ENCODE measurements at regions of chr3 and their contacts with region 1.

Region 1: DNA sequence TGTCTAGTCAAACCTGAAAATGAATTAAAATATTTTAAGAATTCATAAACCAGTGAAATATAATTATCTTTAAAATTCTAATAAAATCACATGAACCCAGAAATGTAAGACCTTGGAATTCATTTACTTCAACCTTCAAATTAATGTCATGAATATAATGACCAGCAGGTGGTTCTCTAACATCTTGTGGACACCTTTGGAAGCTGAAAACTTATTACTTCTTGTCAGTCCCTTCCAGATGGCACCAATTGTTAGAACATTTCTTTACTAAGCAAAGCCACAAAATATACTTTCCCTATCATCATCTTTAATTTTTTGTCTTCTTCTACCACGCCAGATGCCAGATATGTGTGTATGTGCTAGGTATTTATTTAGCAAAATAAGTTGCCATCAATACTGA is 240.0 kb downstream of the MBNL1 start:
- DNase-seq: peak; percentile 33
- ATAC-seq: peak; percentile 52; the same call in 1 of the 2 replicates
- H3K4me3 ChIP-seq: no peak overlapping the region
- H3K27ac ChIP-seq: no peak overlapping the region
- H3K4me1 ChIP-seq: no peaks in the 10 kb centered on the region
- H3K27me3 ChIP-seq: no peaks in the 10 kb centered on the region
- CTCF ChIP-seq: peak; percentile 40 to 46 (median 42); a peak in 4 of 6 replicates
- POLR2A ChIP-seq: no peak
- RAD21 ChIP-seq: peak; percentile 63

Region 2: DNA sequence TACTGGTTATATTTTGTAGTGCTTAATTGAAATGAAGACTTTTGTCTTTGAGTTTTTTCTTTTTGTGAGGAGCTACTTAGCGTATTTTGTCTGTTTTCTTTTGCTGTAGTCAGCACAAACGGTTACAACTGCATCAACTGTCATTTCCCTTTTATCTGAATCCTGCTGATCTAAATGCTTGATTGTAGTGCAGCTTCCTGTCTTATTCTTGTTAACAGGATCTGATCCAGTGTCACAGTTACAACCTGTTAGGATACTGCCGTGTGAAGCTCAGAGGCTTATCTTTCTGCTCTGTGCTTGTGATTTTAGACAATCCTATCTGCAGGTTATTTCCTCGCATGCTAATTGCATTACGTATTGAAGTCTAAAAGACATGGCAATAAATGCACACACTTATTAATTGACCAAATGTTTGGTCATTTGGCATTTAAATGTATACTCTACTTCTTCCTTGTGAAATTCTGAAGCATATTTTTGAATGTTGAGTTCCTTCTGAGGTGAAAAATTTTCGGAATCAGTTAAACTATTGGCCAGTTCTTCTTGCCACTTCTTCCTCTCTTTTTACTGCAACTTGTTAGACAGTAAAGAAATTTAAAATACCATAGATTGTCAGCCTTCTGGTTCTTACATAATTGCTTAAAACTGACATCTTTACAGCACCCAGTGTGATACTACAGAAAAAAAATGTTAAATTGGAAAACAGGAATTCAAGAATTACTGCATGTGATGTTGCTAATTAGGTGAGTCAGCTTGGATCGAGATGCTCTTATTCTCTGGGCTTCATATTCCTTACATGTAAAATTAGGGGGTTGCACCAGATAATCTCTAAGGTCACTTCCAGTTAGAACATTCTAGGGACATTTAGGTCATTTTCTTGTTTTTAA is 71.8 kb before region 1 on chr3:
- CTCF ChIA-PET with region 1: no interaction called
- POLR2A ChIA-PET with region 1: no interaction called
- RAD21 ChIA-PET with region 1: no interaction called
- intact Hi-C with region 1: no loop called
- DNase-seq: no peak
- ATAC-seq: no peak
- H3K4me3 ChIP-seq: no peak overlapping the region
- H3K27ac ChIP-seq: no peak overlapping the region
- H3K4me1 ChIP-seq: no peaks in the 10 kb centered on the region; a peak in 1 of 4 replicates
- H3K27me3 ChIP-seq: no peaks in the 10 kb centered on the region
- CTCF ChIP-seq: no peak
- POLR2A ChIP-seq: no peak
- RAD21 ChIP-seq: no peak

Region 3: DNA sequence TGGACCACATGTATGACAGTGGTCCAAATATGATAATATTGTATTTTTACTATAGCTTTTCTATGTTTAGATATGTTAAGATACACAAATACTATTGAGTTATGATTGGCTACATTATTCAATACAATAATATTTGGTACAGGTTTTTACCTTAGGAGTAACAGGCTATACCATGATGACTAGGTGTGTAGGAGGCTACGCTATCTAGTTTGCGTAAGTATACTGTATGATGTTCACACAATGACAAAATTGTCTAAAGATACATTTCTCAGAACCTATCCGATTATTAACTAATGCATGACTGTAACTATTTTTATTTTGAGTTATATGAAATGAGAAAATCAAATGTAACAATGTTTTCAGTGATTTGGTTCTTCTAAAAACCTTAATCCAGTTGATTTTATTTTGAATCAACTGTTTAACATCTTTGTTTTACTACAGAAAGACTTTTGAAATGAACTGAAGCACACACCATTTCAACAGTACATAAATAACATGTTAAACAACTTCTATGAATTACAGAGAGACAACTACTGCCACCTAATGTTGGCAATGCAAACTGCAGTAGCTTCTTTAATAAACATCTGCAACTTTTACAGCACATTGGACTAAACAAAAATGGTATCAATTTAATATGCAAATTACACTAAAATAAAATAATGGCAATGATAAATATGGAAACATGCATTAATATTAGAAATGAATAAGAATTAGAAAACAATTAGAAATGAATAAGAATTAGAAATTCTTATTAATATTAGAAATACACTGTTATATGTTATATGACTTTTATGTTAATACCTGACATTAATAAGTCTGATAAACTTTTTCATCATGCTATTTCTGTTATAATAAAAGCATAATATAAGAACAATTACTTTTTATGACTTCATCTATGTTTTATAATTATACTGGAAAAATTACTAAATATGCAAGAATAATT is 15.8 kb after region 1 on chr3:
- CTCF ChIA-PET with region 1: interaction called, 12 read pairs
- POLR2A ChIA-PET with region 1: no interaction called
- RAD21 ChIA-PET with region 1: no interaction called
- intact Hi-C with region 1: no loop called
- DNase-seq: peak; percentile 33
- ATAC-seq: peak; percentile 55; the same call in 1 of the 2 replicates
- H3K4me3 ChIP-seq: no peak overlapping the region
- H3K27ac ChIP-seq: no peak overlapping the region
- H3K4me1 ChIP-seq: no peaks in the 10 kb centered on the region
- H3K27me3 ChIP-seq: no peaks in the 10 kb centered on the region
- CTCF ChIP-seq: peak; percentile 40 to 88 (median 69); a peak in 5 of 6 replicates
- POLR2A ChIP-seq: no peak
- RAD21 ChIP-seq: peak; percentile 67

Region 4: GRCh38 chr3:152574461-152575079 is 65.9 kb after region 1 on chr3:
- CTCF ChIA-PET with region 1: interaction called, 12 read pairs
- POLR2A ChIA-PET with region 1: no interaction called
- RAD21 ChIA-PET with region 1: interaction called in 1 of 2 experiments, 3 read pairs
- intact Hi-C with region 1: no loop called
- DNase-seq: peak; percentile 38
- ATAC-seq: peak; percentile 83
- H3K4me3 ChIP-seq: no peak overlapping the region
- H3K27ac ChIP-seq: no peak overlapping the region
- H3K4me1 ChIP-seq: no peaks in the 10 kb centered on the region
- H3K27me3 ChIP-seq: no peaks in the 10 kb centered on the region
- CTCF ChIP-seq: peak; percentile 48 to 66 (median 65)
- POLR2A ChIP-seq: no peak
- RAD21 ChIP-seq: peak; percentile 81

Region 5: DNA sequence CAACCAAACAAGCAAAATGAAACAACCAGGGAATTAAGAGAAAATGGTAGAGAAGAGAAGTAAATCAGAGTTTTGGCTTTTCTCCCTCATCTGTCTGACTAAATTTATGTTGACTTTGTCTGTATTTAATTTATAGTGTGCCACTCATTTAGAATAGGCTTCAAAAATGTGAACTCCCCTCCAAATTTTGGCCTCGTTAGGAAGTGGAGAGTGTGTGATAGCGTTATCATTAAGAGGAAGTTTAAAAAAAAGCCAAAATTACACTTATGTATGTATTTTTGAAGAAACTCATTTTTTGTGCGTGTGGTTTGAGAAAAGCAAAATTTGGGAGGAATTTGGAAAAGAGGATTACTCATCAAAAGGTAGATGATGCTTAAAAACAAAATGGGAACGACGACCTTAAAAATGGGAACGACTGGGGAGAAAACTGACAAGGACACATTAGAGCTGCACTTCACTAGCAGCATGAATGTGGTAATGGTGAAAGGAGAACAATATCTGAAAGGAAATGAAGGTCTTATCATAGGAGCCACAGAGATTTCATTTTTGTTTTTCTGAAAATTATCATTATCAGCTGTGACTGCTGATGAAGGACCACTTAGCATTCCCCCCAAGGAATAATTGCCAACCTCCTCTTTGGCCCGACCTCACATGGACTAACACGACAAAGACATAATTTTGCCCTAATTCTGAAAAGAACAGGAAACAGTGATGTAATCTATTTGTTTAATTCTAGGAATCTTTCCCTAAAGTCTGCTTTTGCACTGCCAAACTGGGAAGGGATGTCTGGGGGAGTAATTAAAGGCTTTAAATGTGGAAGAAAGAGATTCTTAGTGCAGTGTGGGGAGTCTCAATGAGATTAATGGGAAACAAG is 163.0 kb after region 1 on chr3:
- CTCF ChIA-PET with region 1: no interaction called
- POLR2A ChIA-PET with region 1: no interaction called
- RAD21 ChIA-PET with region 1: no interaction called
- intact Hi-C with region 1: no loop called
- DNase-seq: no peak
- ATAC-seq: no peak
- H3K4me3 ChIP-seq: no peak overlapping the region
- H3K27ac ChIP-seq: no peak overlapping the region
- H3K4me1 ChIP-seq: no peaks in the 10 kb centered on the region
- H3K27me3 ChIP-seq: no peaks in the 10 kb centered on the region
- CTCF ChIP-seq: no peak
- POLR2A ChIP-seq: no peak
- RAD21 ChIP-seq: no peak

Region 6: GRCh38 chr3:152695840-152696239 is 187.1 kb after region 1 on chr3:
- CTCF ChIA-PET with region 1: no interaction called
- POLR2A ChIA-PET with region 1: no interaction called
- RAD21 ChIA-PET with region 1: no interaction called
- intact Hi-C with region 1: no loop called
- DNase-seq: no peak
- ATAC-seq: no peak
- H3K4me3 ChIP-seq: no peak overlapping the region
- H3K27ac ChIP-seq: no peak overlapping the region
- H3K4me1 ChIP-seq: no peaks in the 10 kb centered on the region
- H3K27me3 ChIP-seq: no peaks in the 10 kb centered on the region
- CTCF ChIP-seq: no peak
- POLR2A ChIP-seq: no peak
- RAD21 ChIP-seq: peak; percentile 25; the same call in 1 of the 2 replicates

Region 7: DNA sequence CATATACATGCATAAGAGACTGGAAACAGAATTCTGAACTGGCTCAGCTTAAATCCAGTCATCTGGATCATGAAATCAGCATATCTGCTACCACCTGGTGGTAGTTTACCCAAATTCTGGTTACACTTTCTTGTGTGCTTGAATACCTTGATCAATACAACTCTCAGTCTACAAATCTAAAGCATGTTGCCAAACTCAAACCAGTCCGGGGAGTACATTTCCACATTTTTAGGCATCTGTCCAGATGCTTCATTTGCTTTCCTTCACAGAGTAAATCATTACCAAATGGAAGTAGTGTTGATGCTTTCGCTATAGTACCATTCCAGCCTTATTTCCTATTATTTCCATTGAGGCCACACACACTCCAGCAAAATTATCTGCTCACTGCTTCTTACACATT is 452.6 kb after region 1 on chr3:
- CTCF ChIA-PET with region 1: interaction called, 5 read pairs
- POLR2A ChIA-PET with region 1: no interaction called
- RAD21 ChIA-PET with region 1: no interaction called
- intact Hi-C with region 1: loop called (anchors 1 kb)
- DNase-seq: peak; percentile 60
- ATAC-seq: peak; percentile 82
- H3K4me3 ChIP-seq: no peak overlapping the region
- H3K27ac ChIP-seq: no peak overlapping the region
- H3K4me1 ChIP-seq: peaks cover 5 to 14% of the 10 kb centered on the region in 2 experiments; a peak in 3 of 4 replicates
- H3K27me3 ChIP-seq: no peaks in the 10 kb centered on the region
- CTCF ChIP-seq: peak; percentile 48 to 68 (median 51)
- POLR2A ChIP-seq: no peak
- RAD21 ChIP-seq: peak; percentile 80

Measured in HCT116 (cell line).